PC-9 (cell line): ENCODE measurements at regions of chr13 and their contacts with region 1.

Region 1: DNA sequence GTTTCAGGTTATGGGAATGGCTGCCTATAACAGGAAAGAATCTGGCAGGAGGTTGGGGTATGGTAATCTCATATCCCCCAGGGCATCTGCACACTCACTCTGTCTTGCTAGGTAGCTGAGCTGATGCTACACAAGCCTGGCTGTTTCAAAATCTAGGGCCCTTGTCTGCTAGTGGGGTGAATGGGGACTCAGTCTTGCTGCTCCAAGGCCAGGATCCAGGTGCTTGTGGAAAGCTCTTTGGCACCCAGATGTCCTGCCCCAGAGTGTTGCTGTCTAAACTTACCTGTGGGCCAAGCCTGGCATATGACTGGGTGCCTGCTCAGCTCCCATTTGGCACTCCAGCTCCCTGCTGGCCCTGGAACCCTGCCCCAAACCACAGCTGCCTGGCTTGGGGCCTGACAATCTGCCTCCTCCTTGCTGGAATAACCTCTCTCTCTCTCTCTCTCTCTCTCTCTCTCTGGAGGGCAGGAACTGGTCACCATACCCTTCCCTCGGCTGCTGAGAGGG is 158.1 kb upstream of the TSC22D1 start:
- DNase-seq: peak; percentile 66 to 71
- H3K4me3 ChIP-seq: no peak overlapping the region
- H3K27ac ChIP-seq: peak overlapping the region; percentile 22
- H3K4me1 ChIP-seq: peaks cover 47% of the 10 kb centered on the region
- H3K27me3 ChIP-seq: no peaks in the 10 kb centered on the region
- CTCF ChIP-seq: no peak

Region 2: DNA sequence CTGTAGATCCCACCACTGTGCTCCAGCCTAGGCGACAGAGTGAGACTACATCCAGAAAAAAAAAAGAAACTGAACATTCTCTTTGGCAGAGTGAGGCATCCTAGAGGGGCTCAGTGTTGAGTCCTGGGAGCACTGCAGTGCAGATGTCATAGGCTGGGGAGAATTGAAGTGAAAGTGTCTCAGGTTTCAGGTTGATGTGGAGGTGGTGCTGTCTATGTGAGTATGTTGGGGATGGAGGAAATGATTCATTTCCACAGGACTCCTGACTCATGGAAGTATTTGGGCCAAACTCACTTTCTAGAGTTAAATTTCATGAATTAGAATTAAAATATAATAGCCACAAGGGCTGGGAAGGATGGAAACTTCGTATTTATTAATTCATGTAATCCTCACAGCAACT is 23.7 kb before region 1 on chr13:
- CTCF ChIA-PET with region 1: no interaction called
- POLR2A ChIA-PET with region 1: no interaction called
- intact Hi-C with region 1: loop called (anchors 1 kb)
- DNase-seq: peak; percentile 48 to 89
- H3K4me3 ChIP-seq: no peak overlapping the region
- H3K27ac ChIP-seq: peak overlapping the region; percentile 94
- H3K4me1 ChIP-seq: peaks cover 60% of the 10 kb centered on the region
- H3K27me3 ChIP-seq: no peaks in the 10 kb centered on the region
- CTCF ChIP-seq: no peak

Region 3: DNA sequence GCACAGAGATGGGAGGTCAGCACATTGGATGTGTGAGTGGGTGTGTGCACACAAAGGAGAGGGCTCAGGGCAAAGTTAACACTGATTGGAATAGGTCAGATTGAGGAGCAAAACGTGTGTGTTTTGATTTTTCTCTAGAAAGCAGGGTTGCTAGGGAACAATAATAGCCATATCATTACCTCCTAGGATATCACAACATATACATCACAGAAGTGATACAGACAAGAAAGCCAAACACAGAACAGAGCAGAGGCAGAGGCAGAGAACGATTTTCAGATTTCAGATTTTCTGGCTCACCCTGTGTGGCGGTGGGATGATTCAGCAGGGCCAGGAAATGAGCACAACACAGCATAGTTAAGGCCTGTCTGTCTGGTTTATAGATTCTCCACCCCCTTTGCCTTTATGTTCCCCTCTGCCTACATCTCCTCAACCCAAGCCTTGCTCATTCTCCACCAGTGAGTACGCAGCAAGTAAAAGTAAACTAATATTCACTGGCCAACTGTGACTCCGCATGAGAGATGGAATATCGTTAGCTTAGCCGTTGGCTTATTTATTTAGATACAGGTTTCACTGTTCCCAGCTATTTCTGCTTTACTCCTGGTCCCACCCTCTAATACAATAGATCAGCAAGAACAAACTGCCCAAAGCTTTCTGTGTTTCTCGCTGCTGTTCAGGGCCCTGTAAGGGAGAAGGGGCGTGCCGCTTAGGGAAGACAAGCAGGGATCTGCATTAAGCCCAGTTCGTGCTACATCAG is 24.6 kb after region 1 on chr13:
- CTCF ChIA-PET with region 1: no interaction called
- POLR2A ChIA-PET with region 1: no interaction called
- intact Hi-C with region 1: loop called (anchors 1 kb)
- DNase-seq: peak; percentile 56 to 91
- H3K4me3 ChIP-seq: peak overlapping the region; percentile 48
- H3K27ac ChIP-seq: peak overlapping the region; percentile 98
- H3K4me1 ChIP-seq: peaks cover 68% of the 10 kb centered on the region
- H3K27me3 ChIP-seq: no peaks in the 10 kb centered on the region
- CTCF ChIP-seq: no peak

Region 4: GRCh38 chr13:44803390-44803789 is 69.1 kb after region 1 on chr13:
- CTCF ChIA-PET with region 1: no interaction called
- POLR2A ChIA-PET with region 1: interaction called, 19 read pairs
- intact Hi-C with region 1: no loop called
- DNase-seq: no peak
- H3K4me3 ChIP-seq: no peak overlapping the region
- H3K27ac ChIP-seq: no peak overlapping the region
- H3K4me1 ChIP-seq: peaks cover 19% of the 10 kb centered on the region
- H3K27me3 ChIP-seq: no peaks in the 10 kb centered on the region
- CTCF ChIP-seq: no peak

Region 5: DNA sequence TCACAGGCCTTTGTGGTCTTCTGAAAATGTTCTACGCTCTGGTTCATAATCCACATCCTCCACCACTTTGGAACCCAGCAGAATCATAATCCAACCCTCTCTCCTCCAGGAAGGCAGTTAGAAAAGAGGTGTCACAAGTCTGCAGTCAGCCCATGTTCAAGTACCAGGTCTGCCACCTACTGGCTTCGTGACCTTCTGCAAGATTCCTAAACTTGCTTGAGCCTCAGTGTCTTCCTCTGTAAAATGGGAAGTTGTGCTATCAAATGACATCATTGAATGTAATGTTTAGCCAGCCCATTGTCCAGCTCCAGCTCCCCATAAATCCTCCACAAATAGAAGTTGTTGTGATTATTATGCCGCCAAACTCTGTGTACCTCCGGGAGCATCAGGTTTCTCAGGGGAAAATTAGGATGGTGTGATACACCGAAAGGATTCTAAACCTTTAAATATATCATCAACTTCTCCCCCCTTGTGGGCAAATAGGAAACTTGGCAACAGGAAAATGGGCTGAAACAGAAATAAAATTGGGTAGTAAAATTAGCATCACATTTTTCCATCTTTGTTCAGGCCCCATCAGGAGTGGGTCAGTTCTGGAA is 145.3 kb after region 1 on chr13:
- CTCF ChIA-PET with region 1: no interaction called
- POLR2A ChIA-PET with region 1: no interaction called
- intact Hi-C with region 1: loop called (anchors 10 kb)
- DNase-seq: peak in 1 of 2 experiments; percentile 12
- H3K4me3 ChIP-seq: no peak overlapping the region
- H3K27ac ChIP-seq: no peak overlapping the region
- H3K4me1 ChIP-seq: no peaks in the 10 kb centered on the region
- H3K27me3 ChIP-seq: no peaks in the 10 kb centered on the region
- CTCF ChIP-seq: peak; percentile 65

Region 6: DNA sequence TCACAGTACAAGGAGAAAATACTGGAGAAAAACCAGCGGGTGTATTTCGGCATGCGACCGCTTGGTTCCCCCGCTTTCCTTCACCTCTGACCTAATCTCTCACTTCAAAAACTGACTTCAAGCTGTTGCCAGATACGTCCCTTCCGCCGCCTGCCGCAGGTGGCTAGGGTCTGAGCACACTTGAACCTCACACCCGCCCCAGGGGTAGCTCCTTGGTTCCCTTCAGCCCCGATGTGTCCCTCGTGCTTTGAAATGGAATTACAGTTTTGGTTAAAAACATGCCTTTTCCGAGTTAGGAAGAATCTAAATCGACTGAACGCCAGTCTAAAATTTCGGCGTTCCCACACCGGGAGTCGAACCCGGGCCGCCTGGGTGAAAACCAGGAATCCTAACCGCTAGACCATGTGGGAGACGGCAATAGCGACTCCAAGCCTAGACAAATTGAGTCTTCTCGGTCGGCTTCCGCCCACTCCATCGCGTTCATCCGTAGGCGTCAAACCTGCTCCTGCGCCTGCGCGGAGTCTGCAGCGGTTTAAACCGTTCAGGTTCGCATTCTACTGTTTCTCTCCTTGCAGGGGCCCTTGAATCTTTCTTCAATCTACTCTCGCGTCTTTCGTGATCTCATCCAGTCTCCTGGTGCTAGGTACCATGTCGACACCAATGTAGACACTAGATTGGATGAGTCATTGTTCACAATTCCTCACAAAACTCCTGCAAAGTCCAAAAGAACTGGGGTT is 183.5 kb after region 1 on chr13:
- CTCF ChIA-PET with region 1: no interaction called
- POLR2A ChIA-PET with region 1: no interaction called
- intact Hi-C with region 1: loop called (anchors 1 kb)
- DNase-seq: peak; percentile 91 to 94
- H3K4me3 ChIP-seq: peak overlapping the region; percentile 63
- H3K27ac ChIP-seq: peak overlapping the region; percentile 86
- H3K4me1 ChIP-seq: peaks cover 34% of the 10 kb centered on the region
- H3K27me3 ChIP-seq: no peaks in the 10 kb centered on the region
- CTCF ChIP-seq: peak; percentile 37; the same call in 1 of the 2 replicates